ENCODE measurements at regions of chr6 and their contacts with region 1.

Region 1: DNA sequence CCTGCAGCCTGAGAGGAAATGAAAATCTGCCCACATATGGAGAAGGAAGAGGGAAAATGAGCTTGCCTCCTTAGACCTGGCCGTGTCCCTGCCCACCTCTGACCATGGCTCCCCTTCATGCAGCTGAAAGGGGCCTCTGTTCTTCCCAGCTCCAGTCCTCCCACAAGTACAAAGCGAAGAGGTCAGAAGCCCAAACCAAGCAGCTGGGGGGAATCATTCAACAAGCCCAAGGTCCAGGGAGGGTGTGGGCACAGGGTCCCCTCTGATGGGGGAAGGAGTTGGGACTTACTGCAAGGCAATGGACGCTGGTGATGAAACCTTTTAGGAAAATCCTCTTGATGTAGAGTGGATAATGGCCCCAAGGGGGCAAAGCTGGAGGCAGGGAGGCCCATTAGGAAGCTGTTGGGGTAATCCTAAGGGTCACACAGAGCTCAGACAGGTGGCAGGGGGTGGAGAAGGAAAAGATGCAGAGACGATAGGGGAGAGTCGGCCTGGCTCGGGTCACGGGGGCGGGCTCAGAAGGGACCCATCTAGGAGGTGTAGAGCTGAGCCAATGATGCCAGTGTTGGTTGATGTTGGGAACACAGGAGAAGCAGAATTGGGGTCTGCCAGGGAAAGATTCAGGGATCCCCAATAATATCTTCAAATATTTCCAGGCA is 16.1 kb upstream of the GRM4 start:
- DNase-seq: peak; percentile 7
- ATAC-seq: no peak
- H3K4me3 Mint-ChIP-seq: no peak overlapping the region
- H3K27ac Mint-ChIP-seq: no peak overlapping the region
- H3K4me1 Mint-ChIP-seq: peaks cover 3% of the 10 kb centered on the region
- H3K27me3 Mint-ChIP-seq: no peaks in the 10 kb centered on the region
- CTCF ChIP-seq: no peak

Region 2: DNA sequence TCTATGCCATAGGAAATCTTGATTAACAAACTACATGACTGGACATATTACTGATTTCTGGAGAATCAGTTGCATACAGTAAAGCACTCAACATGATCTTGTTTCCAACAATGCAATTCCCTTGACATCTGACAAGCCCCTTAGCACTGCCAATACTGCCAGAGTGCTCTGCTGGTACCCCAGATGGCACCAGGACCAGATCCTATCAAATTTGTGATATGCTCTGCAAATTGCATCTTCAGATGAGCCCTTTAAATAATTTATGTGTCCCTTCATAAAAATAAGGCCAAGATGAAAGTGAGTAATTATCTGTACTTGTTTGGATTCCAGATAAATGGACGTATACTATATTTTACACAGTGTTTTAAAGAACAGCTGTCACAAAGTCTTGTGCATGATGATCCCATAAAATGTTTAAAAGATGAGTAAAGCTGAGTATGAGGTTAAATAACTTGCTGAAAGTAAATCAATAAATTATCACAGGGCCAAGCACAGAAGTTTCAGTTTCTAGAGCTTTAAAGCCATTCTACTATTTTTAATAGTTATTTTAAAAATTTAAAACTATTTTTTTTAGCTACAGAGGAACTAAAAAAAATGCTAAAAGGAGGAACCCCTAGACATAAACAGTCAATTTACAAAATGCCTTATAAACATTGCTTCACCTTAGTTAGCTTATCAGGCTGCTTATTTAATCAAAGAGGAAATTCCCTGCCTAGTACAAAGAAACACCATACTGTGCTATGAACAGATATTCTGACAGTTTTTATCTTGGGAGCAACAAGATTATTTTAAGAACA is 188.3 kb after region 1 on chr6:
- CTCF ChIA-PET with region 1: no interaction called
- POLR2A ChIA-PET with region 1: no interaction called
- intact Hi-C with region 1: loop called (anchors 5 kb)
- DNase-seq: no peak
- ATAC-seq: no peak
- H3K4me3 Mint-ChIP-seq: no peak overlapping the region
- H3K27ac Mint-ChIP-seq: no peak overlapping the region
- H3K4me1 Mint-ChIP-seq: peaks cover 48% of the 10 kb centered on the region
- H3K27me3 Mint-ChIP-seq: no peaks in the 10 kb centered on the region
- CTCF ChIP-seq: no peak

Region 3: GRCh38 chr6:34414999-34415858 is 253.2 kb after region 1 on chr6:
- CTCF ChIA-PET with region 1: interaction called, 29 read pairs
- POLR2A ChIA-PET with region 1: interaction called, 3 read pairs
- intact Hi-C with region 1: loop called (anchors 1 kb)
- DNase-seq: no peak
- ATAC-seq: peak; percentile 83
- H3K4me3 Mint-ChIP-seq: no peak overlapping the region
- H3K27ac Mint-ChIP-seq: no peak overlapping the region
- H3K4me1 Mint-ChIP-seq: peaks cover 6% of the 10 kb centered on the region
- H3K27me3 Mint-ChIP-seq: no peaks in the 10 kb centered on the region
- CTCF ChIP-seq: no peak

Region 4: GRCh38 chr6:35240840-35241801 is 1079.1 kb after region 1 on chr6:
- CTCF ChIA-PET with region 1: no interaction called
- POLR2A ChIA-PET with region 1: no interaction called
- intact Hi-C with region 1: loop called (anchors 2 kb)
- DNase-seq: peak; percentile 63
- ATAC-seq: peak; percentile 81
- H3K4me3 Mint-ChIP-seq: no peak overlapping the region
- H3K27ac Mint-ChIP-seq: no peak overlapping the region
- H3K4me1 Mint-ChIP-seq: no peaks in the 10 kb centered on the region
- H3K27me3 Mint-ChIP-seq: no peaks in the 10 kb centered on the region
- CTCF ChIP-seq: peak; percentile 100

Measured in activated B cell treated with CpG ODN at 0.5 μM for 24 hours (primary cell).